K562 (cell line): ENCODE measurements at regions of chr9 and their contacts with region 1.

Region 1: DNA sequence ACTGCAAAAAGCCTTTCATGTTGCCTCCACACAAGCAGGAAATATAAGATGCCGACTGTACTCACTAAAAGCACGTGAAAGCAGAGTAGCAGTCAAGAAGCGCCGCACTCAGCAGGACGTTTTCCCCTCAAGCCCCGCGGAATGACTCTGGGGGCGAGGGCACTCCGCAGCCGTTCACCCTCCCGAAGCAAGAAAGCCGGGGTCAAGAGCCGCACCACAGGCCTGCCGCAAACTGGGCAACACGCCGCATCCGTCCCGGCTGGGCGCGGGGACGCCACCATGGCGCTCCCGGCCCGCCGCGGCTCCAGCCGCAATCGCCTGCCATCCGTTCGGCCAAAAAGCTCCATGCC is 364 bp downstream of the RPS6 start:
- DNase-seq: peak in 3 of 4 experiments; percentile 22 to 44 (median 43)
- ATAC-seq: peak; percentile 38
- H3K4me3 ChIP-seq: peak overlapping the region; percentile 92
- H3K27ac ChIP-seq: peak overlapping the region; percentile 88
- H3K4me1 ChIP-seq: peaks cover 0 to 4% of the 10 kb centered on the region in 2 experiments; a peak in 2 of 5 replicates
- H3K27me3 ChIP-seq: no peaks in the 10 kb centered on the region
- CTCF ChIP-seq: no peak
- EP300 ChIP-seq: no peak
- POLR2A ChIP-seq: no peak
- RAD21 ChIP-seq: no peak

Region 2: GRCh38 chr9:19199012-19199411 is 180.7 kb before region 1 on chr9:
- CTCF ChIA-PET with region 1: no interaction called
- POLR2A ChIA-PET with region 1: interaction called, 6 read pairs
- in situ Hi-C with region 1: no loop called
- intact Hi-C with region 1: loop called (anchors 10 kb)
- DNase-seq: no peak
- ATAC-seq: no peak
- H3K4me3 ChIP-seq: no peak overlapping the region
- H3K27ac ChIP-seq: no peak overlapping the region
- H3K4me1 ChIP-seq: peaks cover 4 to 17% of the 10 kb centered on the region in 2 experiments; a peak in 3 of 5 replicates
- H3K27me3 ChIP-seq: no peaks in the 10 kb centered on the region
- CTCF ChIP-seq: no peak
- EP300 ChIP-seq: no peak
- POLR2A ChIP-seq: no peak
- RAD21 ChIP-seq: no peak; a peak in 1 of 4 replicates

Region 3: GRCh38 chr9:19331877-19332276 is 47.8 kb before region 1 on chr9:
- CTCF ChIA-PET with region 1: no interaction called
- POLR2A ChIA-PET with region 1: no interaction called
- in situ Hi-C with region 1: no loop called
- intact Hi-C with region 1: no loop called
- DNase-seq: no peak
- ATAC-seq: no peak
- H3K4me3 ChIP-seq: no peak overlapping the region
- H3K27ac ChIP-seq: no peak overlapping the region
- H3K4me1 ChIP-seq: no peaks in the 10 kb centered on the region
- H3K27me3 ChIP-seq: no peaks in the 10 kb centered on the region
- CTCF ChIP-seq: no peak
- EP300 ChIP-seq: no peak
- POLR2A ChIP-seq: no peak
- RAD21 ChIP-seq: no peak

Region 4: GRCh38 chr9:19408693-19409400 is 29.2 kb after region 1 on chr9 and contains the start of gene ACER2:
- CTCF ChIA-PET with region 1: no interaction called
- POLR2A ChIA-PET with region 1: interaction called, 5 read pairs
- in situ Hi-C with region 1: no loop called
- intact Hi-C with region 1: loop called (anchors 2 kb)
- DNase-seq: peak; percentile 93 to 95 (median 94)
- ATAC-seq: peak; percentile 94
- H3K4me3 ChIP-seq: peak within 1 kb of the TSS; percentile 49
- H3K27ac ChIP-seq: peak within 1 kb of the TSS; percentile 66
- H3K4me1 ChIP-seq: peaks cover 18 to 19% of the 10 kb centered on the region in 2 experiments; a peak in 4 of 5 replicates
- H3K27me3 ChIP-seq: no peaks in the 10 kb centered on the region
- CTCF ChIP-seq: peak in 2 of 3 experiments; percentile 2 to 17; a peak in 1 of 6 replicates
- EP300 ChIP-seq: no peak
- POLR2A ChIP-seq: peak; percentile 89
- RAD21 ChIP-seq: no peak
- polyA plus RNA-seq, gene ACER2: 0.17 to 0.23 TPM